Activated CD4-positive, alpha-beta memory T cell treated with anti-CD3 and anti-CD28 coated beads, Interleukin-2, amount 10 ng/mL, durations not matched to agents 7 days and 5 days (primary cell): ENCODE measurements at regions of chr6 and their contacts with region 1.

Region 1: GRCh38 chr6:157800420-157801237 is 22.4 kb upstream of the SNX9 start:
- DNase-seq: peak; percentile 56
- H3K4me3 Mint-ChIP-seq: peak overlapping the region; percentile 7
- H3K27ac Mint-ChIP-seq: peak overlapping the region; percentile 27
- H3K4me1 Mint-ChIP-seq: peaks cover 27% of the 10 kb centered on the region
- H3K27me3 Mint-ChIP-seq: peaks cover 36% of the 10 kb centered on the region

Region 2: GRCh38 chr6:157770946-157771345 is 29.7 kb before region 1 on chr6:
- CTCF ChIA-PET with region 1: no interaction called
- POLR2A ChIA-PET with region 1: interaction called, 10 read pairs
- DNase-seq: no peak
- H3K4me3 Mint-ChIP-seq: no peak overlapping the region
- H3K27ac Mint-ChIP-seq: no peak overlapping the region
- H3K4me1 Mint-ChIP-seq: peaks cover 30% of the 10 kb centered on the region
- H3K27me3 Mint-ChIP-seq: peaks cover 27% of the 10 kb centered on the region